ENCODE measurements at regions of chr4 and their contacts with region 1.

Region 1: DNA sequence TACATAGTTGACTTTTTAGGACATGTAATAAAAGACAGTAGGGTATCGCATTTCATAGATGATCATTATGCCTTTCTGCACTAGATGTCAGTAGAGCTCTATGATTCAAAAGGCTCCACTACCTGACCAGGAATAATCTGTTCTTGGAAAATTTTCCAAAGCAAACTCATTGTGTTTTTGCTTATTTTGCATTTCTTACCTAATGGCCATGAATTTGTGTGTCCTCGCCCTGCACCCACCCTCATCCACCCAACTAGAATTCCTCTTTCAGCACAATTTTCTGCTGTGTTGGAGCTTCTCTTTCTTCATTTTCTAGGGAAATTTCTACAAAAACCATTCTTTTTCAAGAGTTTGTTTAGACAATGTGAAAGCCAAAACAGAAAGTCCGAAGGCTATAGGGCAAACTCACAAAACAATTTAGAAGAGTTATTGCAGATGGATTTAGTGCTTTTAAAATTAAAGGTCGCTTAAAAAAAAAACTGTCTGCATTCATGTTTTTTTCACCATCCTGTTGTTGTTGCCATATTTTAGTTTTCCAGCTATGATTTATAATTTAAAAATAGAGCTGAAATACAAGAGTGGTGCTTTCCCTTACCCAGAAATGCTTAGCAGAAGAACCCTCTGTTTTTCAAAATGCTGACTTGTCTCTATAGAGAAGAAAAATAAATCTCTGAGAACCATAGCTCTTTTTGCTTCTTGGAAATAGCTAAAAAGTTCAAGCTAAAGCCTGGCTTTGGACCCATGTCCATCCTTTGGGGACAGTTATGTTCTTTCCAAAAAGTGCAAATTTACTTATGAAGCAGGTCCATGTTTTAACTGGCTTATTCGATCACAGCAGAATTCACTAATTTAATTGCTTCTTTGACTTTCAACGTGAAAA is 183.7 kb downstream of the SPATA18 start:
- DNase-seq: no peak
- H3K4me3 ChIP-seq: peak overlapping the region; percentile 31 to 37
- H3K27ac ChIP-seq: no peak overlapping the region
- H3K4me1 ChIP-seq: peaks cover 0 to 5% of the 10 kb centered on the region in 2 donors
- H3K27me3 ChIP-seq: no peaks in the 10 kb centered on the region
- CTCF ChIP-seq: peak; percentile 43 to 71 (median 50)

Region 2: DNA sequence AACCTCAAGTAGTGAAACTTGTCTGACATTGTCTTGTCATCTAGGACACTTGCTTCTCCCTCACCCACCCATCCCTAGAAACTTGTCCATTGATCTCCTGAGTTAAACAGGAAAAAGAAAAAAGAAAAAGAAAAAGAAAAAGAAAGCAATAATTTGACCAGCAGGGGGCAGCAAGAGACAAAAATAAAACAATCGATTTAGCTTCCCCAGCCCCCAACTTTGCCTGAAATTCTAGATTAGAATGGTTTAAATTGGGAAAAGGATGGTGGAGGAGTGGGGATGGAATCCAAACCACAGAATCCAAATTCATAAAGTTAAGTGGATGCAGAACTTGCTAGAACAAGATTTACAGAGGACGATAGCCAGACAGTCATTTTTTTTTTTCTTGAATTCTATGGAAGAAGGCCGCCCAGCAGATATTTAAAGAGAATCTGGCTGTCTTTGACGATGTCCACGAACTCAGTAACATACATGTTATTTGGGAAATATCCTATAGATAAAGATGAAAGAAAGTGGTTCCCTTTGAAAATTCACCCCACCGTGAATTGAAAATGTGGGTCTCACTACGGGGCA is 141.4 kb after region 1 on chr4:
- intact Hi-C with region 1: loop called (anchors 5 kb)
- DNase-seq: no peak
- H3K4me3 ChIP-seq: no peak overlapping the region
- H3K27ac ChIP-seq: no peak overlapping the region
- H3K4me1 ChIP-seq: no peaks in the 10 kb centered on the region
- H3K27me3 ChIP-seq: no peaks in the 10 kb centered on the region
- CTCF ChIP-seq: peak; percentile 37 to 70 (median 54)

Measured in ascending aorta (tissue), 2 donors.